Posterior vena cava (tissue), 2 donors: ENCODE measurements at regions of chr1 and their contacts with region 1.

Region 1: DNA sequence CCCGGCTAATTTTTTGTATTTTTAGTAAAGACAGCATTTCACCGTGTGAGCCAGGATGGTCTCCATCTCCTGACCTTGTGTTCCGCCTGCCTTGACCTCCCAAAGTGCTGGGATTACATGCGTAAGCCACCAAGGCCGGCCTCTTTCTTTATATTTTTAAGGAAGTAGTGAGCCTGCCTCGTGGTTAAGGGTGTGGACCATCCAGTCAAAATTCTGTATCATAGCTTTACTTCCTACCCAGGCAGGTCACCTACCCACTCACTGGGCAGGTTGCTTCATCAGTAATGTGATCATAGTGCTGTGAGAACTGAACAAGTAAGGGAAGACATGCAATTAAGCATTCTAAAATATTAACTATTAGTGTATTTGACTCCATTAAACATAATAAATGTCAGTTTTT is 8.1 kb upstream of the ACOT7 start:
- DNase-seq: no peak

Region 2: GRCh38 chr1:6059866-6060265 is 341.8 kb before region 1 on chr1:
- intact Hi-C with region 1: loop called in 1 of 2 experiments (anchors 10 kb)
- DNase-seq: no peak

Region 3: DNA sequence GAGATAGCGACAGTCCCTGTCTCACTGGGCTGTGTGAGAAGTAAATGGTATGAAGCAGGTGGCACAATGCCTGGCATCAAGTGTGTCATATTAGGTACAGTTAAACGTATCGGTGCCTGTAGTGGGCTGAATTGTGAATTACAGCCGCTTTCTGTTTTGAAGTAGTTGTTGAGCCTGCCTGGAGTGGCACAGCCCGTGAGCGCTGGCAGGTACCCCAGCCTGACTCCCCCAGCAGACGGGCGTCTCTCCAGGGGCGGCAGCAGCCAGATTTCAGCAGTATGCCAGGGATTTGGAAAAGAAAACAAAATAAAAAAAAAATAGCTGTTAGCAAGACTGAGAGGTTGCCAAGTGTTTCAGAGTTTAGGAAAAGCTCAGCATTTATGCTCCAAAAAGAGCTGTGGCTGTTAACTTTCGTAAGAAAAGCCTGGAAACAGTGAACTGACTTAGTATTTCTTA is 114.2 kb before region 1 on chr1:
- intact Hi-C with region 1: no loop called
- DNase-seq: peak; percentile 83

Region 4: GRCh38 chr1:6367381-6368012 is 34.2 kb before region 1 on chr1:
- intact Hi-C with region 1: loop called in 1 of 2 experiments (anchors 5 kb)
- DNase-seq: no peak